ENCODE measurements at regions of chr1 and their contacts with region 1.

Region 1: DNA sequence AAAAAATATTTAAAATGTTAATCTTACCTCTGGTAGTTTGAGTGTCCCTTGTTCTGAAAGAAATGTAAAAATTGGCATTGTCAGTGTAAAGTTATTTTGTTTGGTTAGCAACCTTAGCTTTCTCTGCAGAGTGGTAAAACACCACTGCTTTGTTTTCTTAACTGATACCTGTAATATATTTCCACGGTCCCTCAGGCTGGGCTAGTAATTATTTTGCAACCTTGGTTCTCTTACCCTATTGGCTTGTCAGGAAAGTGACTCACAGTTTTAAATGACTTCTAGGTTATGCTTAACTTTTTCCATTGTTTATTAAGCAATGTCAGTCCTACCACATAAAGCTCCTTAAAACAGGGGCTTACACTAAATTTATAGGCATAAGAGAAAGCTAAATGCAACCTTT is 276.6 kb downstream of the VAV3 start:
- DNase-seq: peak; percentile 94
- H3K4me3 Mint-ChIP-seq: peak overlapping the region; percentile 79
- H3K27ac Mint-ChIP-seq: peak overlapping the region; percentile 90
- H3K4me1 Mint-ChIP-seq: peaks cover 42% of the 10 kb centered on the region
- H3K27me3 Mint-ChIP-seq: no peaks in the 10 kb centered on the region
- CTCF ChIP-seq: no peak

Region 2: DNA sequence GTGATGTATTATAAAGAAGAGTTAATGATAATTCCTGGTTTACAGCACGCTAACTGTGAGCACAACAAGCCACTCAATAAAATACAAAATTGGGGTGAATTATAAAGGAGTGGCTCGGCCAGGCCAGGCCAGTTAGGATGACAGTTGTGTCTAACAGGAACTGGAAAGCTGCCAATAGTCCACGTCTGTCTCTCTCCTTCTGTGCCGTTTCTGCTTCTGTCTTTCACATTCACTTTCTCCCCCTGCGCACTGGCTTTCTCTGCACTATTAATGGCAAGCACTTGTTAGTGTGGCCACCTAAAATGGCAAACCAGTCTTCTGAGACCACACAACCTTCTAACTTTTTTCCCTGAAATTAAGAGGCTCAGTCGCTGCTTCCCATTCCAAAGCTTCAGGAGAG is 153.3 kb before region 1 on chr1:
- CTCF ChIA-PET with region 1: interaction called, 8 read pairs
- POLR2A ChIA-PET with region 1: interaction called, 26 read pairs
- intact Hi-C with region 1: no loop called
- DNase-seq: peak; percentile 31
- H3K4me3 Mint-ChIP-seq: no peak overlapping the region
- H3K27ac Mint-ChIP-seq: peak overlapping the region; percentile 36
- H3K4me1 Mint-ChIP-seq: peaks cover 42% of the 10 kb centered on the region
- H3K27me3 Mint-ChIP-seq: no peaks in the 10 kb centered on the region
- CTCF ChIP-seq: no peak

Region 3: GRCh38 chr1:107572653-107573211 is 115.6 kb before region 1 on chr1:
- CTCF ChIA-PET with region 1: no interaction called
- POLR2A ChIA-PET with region 1: interaction called, 14 read pairs
- intact Hi-C with region 1: no loop called
- DNase-seq: peak; percentile 95
- H3K4me3 Mint-ChIP-seq: no peak overlapping the region
- H3K27ac Mint-ChIP-seq: peak overlapping the region; percentile 75
- H3K4me1 Mint-ChIP-seq: peaks cover 26% of the 10 kb centered on the region
- H3K27me3 Mint-ChIP-seq: no peaks in the 10 kb centered on the region
- CTCF ChIP-seq: no peak

Region 4: DNA sequence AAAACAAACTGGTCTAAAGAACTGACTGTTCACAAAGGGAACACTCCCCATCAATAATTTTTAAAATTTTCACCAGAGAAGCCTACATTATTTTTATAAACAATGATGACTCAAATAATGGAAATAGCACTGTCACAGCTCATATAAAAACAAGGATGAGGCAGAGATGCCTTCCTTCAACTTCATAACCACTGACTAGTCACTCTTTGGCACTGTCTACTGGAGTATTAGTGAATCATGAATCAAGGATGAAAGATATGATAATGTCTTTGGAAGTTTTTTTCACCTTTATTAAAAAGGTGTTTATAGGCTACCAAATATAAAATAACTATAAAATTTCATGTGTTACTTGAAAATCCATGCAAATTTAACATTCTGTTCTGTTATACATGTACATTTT is 40.3 kb before region 1 on chr1:
- CTCF ChIA-PET with region 1: interaction called, 3 read pairs
- POLR2A ChIA-PET with region 1: interaction called, 10 read pairs
- intact Hi-C with region 1: no loop called
- DNase-seq: peak; percentile 73
- H3K4me3 Mint-ChIP-seq: no peak overlapping the region
- H3K27ac Mint-ChIP-seq: peak overlapping the region; percentile 54
- H3K4me1 Mint-ChIP-seq: peaks cover 35% of the 10 kb centered on the region
- H3K27me3 Mint-ChIP-seq: no peaks in the 10 kb centered on the region
- CTCF ChIP-seq: no peak

Region 5: DNA sequence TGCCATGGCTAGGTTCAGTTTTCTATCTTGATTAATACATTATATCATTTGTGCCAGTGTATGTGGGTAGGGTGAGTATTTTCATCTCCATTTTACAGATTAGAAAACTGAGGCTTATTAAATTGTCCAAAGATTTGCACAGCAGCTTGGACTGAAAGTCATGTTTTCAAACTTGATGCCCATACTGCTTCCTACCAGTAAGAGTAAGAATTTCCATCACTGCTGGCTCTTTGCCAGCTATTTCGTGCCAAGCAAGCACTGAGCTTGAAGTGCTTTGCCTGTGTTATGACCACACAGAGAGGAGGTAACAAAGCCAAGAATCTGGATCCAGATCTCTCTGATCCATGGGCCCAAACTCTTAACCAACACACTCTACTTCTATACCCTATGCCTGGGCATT is 18.4 kb before region 1 on chr1:
- CTCF ChIA-PET with region 1: interaction called, 9 read pairs
- POLR2A ChIA-PET with region 1: interaction called, 48 read pairs
- intact Hi-C with region 1: no loop called
- DNase-seq: peak; percentile 86
- H3K4me3 Mint-ChIP-seq: no peak overlapping the region
- H3K27ac Mint-ChIP-seq: no peak overlapping the region
- H3K4me1 Mint-ChIP-seq: peaks cover 18% of the 10 kb centered on the region
- H3K27me3 Mint-ChIP-seq: no peaks in the 10 kb centered on the region
- CTCF ChIP-seq: no peak

Region 6: DNA sequence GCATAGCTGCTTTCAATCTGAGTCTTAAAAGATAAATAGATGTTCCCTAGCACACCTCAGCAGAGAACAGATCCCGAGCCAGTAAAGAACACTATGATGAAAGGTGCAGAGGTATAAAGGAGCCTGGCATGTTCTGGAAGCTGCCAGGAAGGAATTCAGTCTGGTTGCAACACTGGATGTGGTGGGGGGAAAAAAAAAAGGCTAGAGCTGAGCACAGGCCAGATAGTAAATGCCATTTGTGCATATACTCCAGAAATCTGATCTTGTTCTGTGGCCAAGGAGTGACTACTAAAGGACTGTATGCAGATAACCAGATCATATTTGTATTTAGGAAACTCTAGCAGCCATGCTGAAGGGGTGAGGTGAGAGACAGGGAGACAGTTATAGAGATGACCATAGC is 36.3 kb after region 1 on chr1:
- CTCF ChIA-PET with region 1: interaction called, 4 read pairs
- POLR2A ChIA-PET with region 1: interaction called, 30 read pairs
- intact Hi-C with region 1: no loop called
- DNase-seq: peak; percentile 23
- H3K4me3 Mint-ChIP-seq: no peak overlapping the region
- H3K27ac Mint-ChIP-seq: no peak overlapping the region
- H3K4me1 Mint-ChIP-seq: peaks cover 14% of the 10 kb centered on the region
- H3K27me3 Mint-ChIP-seq: no peaks in the 10 kb centered on the region
- CTCF ChIP-seq: no peak

Region 7: GRCh38 chr1:108643492-108644335 is 955.4 kb after region 1 on chr1:
- CTCF ChIA-PET with region 1: no interaction called
- POLR2A ChIA-PET with region 1: no interaction called
- intact Hi-C with region 1: no loop called
- DNase-seq: peak; percentile 69
- H3K4me3 Mint-ChIP-seq: no peak overlapping the region
- H3K27ac Mint-ChIP-seq: no peak overlapping the region
- H3K4me1 Mint-ChIP-seq: peaks cover 7% of the 10 kb centered on the region
- H3K27me3 Mint-ChIP-seq: no peaks in the 10 kb centered on the region
- CTCF ChIP-seq: peak; percentile 51